Panc1 (cell line): ENCODE measurements at regions of chr1 and their contacts with region 1.

Region 1: DNA sequence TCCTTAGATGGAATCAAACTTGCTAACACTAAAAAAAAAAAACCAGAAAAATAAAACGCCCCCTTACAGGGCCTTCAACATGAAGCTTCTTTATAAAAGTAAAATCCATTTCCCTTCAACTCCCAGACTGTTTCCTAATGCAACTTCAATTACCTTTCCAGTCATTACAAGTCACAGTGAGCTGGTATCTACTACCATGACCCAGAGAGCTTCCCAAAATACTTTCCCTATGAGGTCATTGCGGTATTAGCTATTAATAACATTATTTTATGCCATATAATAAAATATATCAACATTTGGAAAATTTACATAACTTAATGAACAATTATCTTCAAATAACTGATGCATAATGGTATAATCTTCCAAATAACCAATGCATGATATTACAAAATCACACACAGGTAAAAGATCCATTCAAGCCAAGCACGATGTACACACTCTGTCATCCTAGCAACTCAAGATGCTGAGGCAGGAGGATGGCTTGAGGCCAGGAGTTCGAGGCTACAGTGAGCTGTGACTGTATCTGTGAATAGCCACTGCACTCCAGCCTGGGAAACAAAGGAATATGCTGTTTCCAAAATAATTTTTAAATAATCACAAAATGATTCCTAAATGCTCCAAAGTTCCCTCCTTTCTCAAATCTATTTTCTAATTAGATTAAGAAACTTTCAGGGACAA is 24.1 kb downstream of the EIF4G3 start:
- DNase-seq: no peak
- ATAC-seq: no peak
- H3K4me3 ChIP-seq: no peak overlapping the region
- H3K27ac ChIP-seq: no peak overlapping the region
- H3K4me1 ChIP-seq: peaks cover 15% of the 10 kb centered on the region
- H3K27me3 ChIP-seq: no peaks in the 10 kb centered on the region
- CTCF ChIP-seq: no peak

Region 2: GRCh38 chr1:20921285-20921684 is 231.3 kb before region 1 on chr1:
- CTCF ChIA-PET with region 1: no interaction called
- POLR2A ChIA-PET with region 1: no interaction called
- in situ Hi-C with region 1: no loop called
- intact Hi-C with region 1: no loop called
- DNase-seq: no peak
- ATAC-seq: no peak
- H3K4me3 ChIP-seq: no peak overlapping the region
- H3K27ac ChIP-seq: no peak overlapping the region
- H3K4me1 ChIP-seq: no peaks in the 10 kb centered on the region
- H3K27me3 ChIP-seq: no peaks in the 10 kb centered on the region
- CTCF ChIP-seq: no peak

Region 3: GRCh38 chr1:21084111-21084810 is 68.3 kb before region 1 on chr1:
- CTCF ChIA-PET with region 1: no interaction called
- POLR2A ChIA-PET with region 1: interaction called, 12 read pairs
- in situ Hi-C with region 1: no loop called
- intact Hi-C with region 1: no loop called
- DNase-seq: no peak
- ATAC-seq: no peak
- H3K4me3 ChIP-seq: no peak overlapping the region
- H3K27ac ChIP-seq: no peak overlapping the region
- H3K4me1 ChIP-seq: no peaks in the 10 kb centered on the region
- H3K27me3 ChIP-seq: no peaks in the 10 kb centered on the region
- CTCF ChIP-seq: no peak